ENCODE measurements at regions of chr1 and their contacts with region 1.

Region 1: GRCh38 chr1:171741872-171742576 is at the start of gene VAMP4:
- DNase-seq: peak; percentile 81
- H3K4me3 Mint-ChIP-seq: peak within 1 kb of the TSS; percentile 97
- H3K27ac Mint-ChIP-seq: peak within 1 kb of the TSS; percentile 99
- H3K4me1 Mint-ChIP-seq: peaks cover 47% of the 10 kb centered on the region
- H3K27me3 Mint-ChIP-seq: no peaks in the 10 kb centered on the region
- total RNA-seq, gene VAMP4: 10.2 and 11.8 TPM in 2 replicates

Region 2: GRCh38 chr1:170910273-170910672 is 831.8 kb before region 1 on chr1:
- intact Hi-C with region 1: no loop called
- DNase-seq: no peak
- H3K4me3 Mint-ChIP-seq: no peak overlapping the region
- H3K27ac Mint-ChIP-seq: no peak overlapping the region
- H3K4me1 Mint-ChIP-seq: no peaks in the 10 kb centered on the region
- H3K27me3 Mint-ChIP-seq: no peaks in the 10 kb centered on the region

Region 3: GRCh38 chr1:171055966-171056643 is 685.9 kb before region 1 on chr1:
- intact Hi-C with region 1: no loop called
- DNase-seq: no peak
- H3K4me3 Mint-ChIP-seq: no peak overlapping the region
- H3K27ac Mint-ChIP-seq: no peak overlapping the region
- H3K4me1 Mint-ChIP-seq: no peaks in the 10 kb centered on the region
- H3K27me3 Mint-ChIP-seq: no peaks in the 10 kb centered on the region

Region 4: DNA sequence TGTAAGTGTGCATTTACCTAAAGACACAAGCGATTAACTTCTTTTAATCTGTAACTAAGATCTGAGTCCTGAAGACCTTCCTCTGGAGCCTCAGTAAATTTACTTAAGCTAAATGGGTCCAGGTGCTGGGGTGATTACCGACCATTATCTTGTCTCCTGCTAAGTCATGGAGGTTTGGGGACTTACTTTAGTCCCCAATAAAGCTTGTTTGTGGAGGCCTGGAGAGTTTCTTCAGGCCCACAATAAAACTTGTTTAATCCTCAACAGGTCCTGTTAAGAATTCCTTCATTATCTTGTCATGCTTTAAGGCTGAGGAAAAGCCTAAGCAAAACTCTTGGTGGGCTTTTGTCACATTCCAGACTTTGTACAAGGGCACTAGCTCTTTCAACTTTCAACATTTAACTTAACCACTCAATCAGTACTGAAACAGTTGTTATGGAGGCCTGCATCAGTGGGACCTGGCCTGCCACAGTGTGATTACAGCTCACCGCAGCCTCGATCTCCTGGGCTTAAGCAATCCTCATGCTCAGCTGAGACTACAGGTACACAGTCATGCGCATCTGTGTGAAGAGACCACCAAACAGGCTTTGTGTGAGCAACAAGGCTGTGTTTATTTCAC is 344.1 kb before region 1 on chr1:
- intact Hi-C with region 1: no loop called
- DNase-seq: no peak
- H3K4me3 Mint-ChIP-seq: no peak overlapping the region
- H3K27ac Mint-ChIP-seq: no peak overlapping the region
- H3K4me1 Mint-ChIP-seq: no peaks in the 10 kb centered on the region
- H3K27me3 Mint-ChIP-seq: no peaks in the 10 kb centered on the region

Region 5: DNA sequence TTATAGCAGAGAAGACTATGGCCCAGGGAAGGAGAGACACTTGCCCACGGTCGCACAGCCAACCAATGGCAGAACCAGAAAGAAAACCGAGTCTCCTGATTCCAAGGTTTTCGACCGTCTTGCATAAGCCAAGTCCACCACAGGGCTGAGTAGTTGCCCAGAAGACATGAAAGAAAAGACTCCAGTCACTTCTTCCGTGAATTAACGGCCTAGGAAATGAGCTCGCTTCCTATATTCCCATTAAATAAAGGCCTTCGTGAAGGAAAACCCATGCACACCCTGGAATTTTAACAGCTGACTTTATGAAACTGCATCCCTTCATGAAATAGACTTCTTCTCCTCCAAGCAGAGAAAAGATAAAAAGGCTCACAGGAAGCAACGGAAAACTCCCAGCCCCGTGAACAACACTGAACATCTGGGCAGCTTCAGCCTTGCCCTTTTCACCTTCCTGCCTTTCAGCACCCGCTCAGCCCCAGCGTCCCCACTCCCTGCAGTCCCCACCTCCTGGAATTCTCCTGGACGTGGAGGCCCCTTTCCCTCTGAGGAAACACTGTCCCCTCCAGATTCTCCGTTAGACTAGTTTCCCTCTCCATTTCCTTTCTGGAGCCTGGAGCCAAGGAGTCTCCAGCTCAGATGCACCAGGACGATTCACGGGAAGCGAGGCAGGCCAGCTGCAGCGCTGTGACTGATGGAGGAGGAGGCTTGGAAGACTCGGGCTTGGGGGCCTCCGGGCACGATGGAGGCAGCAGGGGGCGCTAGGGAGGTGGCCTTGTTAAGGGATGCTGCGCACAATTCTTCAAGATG is 86.9 kb before region 1 on chr1:
- intact Hi-C with region 1: loop called (anchors 2 kb)
- DNase-seq: peak; percentile 60
- H3K4me3 Mint-ChIP-seq: no peak overlapping the region
- H3K27ac Mint-ChIP-seq: no peak overlapping the region
- H3K4me1 Mint-ChIP-seq: peaks cover 10% of the 10 kb centered on the region
- H3K27me3 Mint-ChIP-seq: peaks cover 21% of the 10 kb centered on the region

Region 6: DNA sequence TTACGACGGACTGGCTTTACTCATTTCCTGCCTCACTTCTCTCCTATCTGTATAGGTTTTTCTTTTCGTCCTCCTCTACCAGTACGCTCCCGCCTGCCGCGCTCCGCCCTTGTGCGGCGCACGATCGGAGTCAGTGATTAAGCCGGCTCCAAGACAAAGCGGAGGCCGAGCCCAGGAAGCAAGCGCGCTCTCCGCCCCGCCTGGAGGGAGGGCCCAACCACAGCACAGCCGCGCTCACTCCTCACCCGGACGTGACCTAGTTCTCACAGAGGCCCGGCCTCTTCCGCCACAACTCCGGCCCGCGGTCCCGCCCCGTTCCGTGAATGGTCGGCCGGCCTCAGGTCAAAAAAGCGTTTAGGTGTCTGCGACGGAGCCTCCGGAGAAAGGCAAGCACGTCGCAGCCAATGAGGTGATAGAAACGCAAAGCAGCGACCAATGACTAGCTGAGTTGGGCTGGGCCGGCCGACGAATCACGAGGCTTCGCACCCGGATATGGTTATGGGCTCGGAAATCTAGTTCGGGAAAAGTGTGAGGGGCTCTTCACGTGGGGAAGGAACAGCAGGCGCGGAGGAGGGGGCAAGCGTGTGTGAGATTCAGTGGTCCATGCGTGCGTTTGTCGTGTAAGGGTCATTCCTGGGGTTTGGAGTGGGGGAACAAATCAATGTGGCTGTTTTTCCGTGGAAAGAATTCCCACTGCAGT is 39.3 kb after region 1 on chr1 and contains the start of gene METTL13:
- intact Hi-C with region 1: loop called (anchors 1 kb)
- DNase-seq: peak; percentile 99
- H3K4me3 Mint-ChIP-seq: peak within 1 kb of the TSS; percentile 93
- H3K27ac Mint-ChIP-seq: peak within 1 kb of the TSS; percentile 92
- H3K4me1 Mint-ChIP-seq: peaks cover 36% of the 10 kb centered on the region
- H3K27me3 Mint-ChIP-seq: no peaks in the 10 kb centered on the region
- total RNA-seq, gene METTL13: 50.0 and 53.6 TPM in 2 replicates

Region 7: GRCh38 chr1:171794085-171794484 is 52.1 kb after region 1 on chr1:
- intact Hi-C with region 1: loop called (anchors 2 kb)
- DNase-seq: peak; percentile 32
- H3K4me3 Mint-ChIP-seq: peak overlapping the region; percentile 28
- H3K27ac Mint-ChIP-seq: peak overlapping the region; percentile 92
- H3K4me1 Mint-ChIP-seq: peaks cover 20% of the 10 kb centered on the region
- H3K27me3 Mint-ChIP-seq: no peaks in the 10 kb centered on the region

Region 8: GRCh38 chr1:171841050-171841940 is 99.3 kb after region 1 on chr1 and contains the start of gene DNM3:
- intact Hi-C with region 1: loop called (anchors 5 kb)
- DNase-seq: peak; percentile 76
- H3K4me3 Mint-ChIP-seq: peak within 1 kb of the TSS; percentile 85
- H3K27ac Mint-ChIP-seq: peak within 1 kb of the TSS; percentile 67
- H3K4me1 Mint-ChIP-seq: peaks cover 14% of the 10 kb centered on the region
- H3K27me3 Mint-ChIP-seq: peaks cover 43% of the 10 kb centered on the region
- total RNA-seq, gene DNM3: 0.37 and 0.41 TPM in 2 replicates

Region 9: DNA sequence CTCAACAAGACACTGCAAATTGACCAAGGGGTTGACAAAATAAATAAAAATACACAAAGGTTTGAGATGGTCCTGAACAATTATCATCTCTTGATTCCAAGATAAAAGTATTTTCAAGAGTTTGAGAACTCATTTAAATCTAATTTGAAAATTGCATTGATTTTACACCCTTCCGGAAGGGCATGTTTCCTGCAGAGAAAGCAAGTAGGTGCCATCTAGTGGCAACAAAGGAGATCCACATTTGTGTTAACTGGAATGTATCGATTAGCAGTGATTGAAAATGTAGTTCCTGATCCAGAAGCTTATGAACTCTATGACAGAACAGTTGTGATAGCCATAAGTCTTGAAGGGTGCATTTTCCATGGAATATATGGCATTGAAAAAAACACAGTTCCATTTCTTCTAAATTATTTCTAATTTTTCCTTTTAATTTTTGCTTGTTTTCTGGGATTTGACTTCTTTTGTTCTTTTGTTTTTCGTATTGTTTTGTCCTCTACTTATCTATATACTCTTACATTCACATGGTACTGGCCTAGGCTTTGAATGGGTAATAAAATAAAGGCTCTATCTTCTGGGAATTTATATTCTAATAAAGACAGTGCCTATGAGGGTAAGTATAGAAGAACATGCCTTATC is 242.9 kb after region 1 on chr1:
- intact Hi-C with region 1: loop called (anchors 10 kb)
- DNase-seq: no peak
- H3K4me3 Mint-ChIP-seq: no peak overlapping the region
- H3K27ac Mint-ChIP-seq: no peak overlapping the region
- H3K4me1 Mint-ChIP-seq: no peaks in the 10 kb centered on the region
- H3K27me3 Mint-ChIP-seq: peaks cover 16% of the 10 kb centered on the region

Region 10: GRCh38 chr1:172338295-172338735 is 596.3 kb after region 1 on chr1:
- intact Hi-C with region 1: no loop called
- DNase-seq: no peak
- H3K4me3 Mint-ChIP-seq: no peak overlapping the region
- H3K27ac Mint-ChIP-seq: peak overlapping the region; percentile 54
- H3K4me1 Mint-ChIP-seq: peaks cover 44% of the 10 kb centered on the region
- H3K27me3 Mint-ChIP-seq: no peaks in the 10 kb centered on the region

Region 11: GRCh38 chr1:172532700-172533509 is 790.9 kb after region 1 on chr1 and contains the start of gene SUCO:
- intact Hi-C with region 1: loop called (anchors 5 kb)
- DNase-seq: peak; percentile 100
- H3K4me3 Mint-ChIP-seq: peak within 1 kb of the TSS; percentile 95
- H3K27ac Mint-ChIP-seq: peak within 1 kb of the TSS; percentile 99
- H3K4me1 Mint-ChIP-seq: peaks cover 38% of the 10 kb centered on the region
- H3K27me3 Mint-ChIP-seq: peaks cover 9% of the 10 kb centered on the region
- total RNA-seq, gene SUCO: 28.2 and 33.3 TPM in 2 replicates